ENCODE measurements at regions of chr12 and their contacts with region 1.

Region 1: DNA sequence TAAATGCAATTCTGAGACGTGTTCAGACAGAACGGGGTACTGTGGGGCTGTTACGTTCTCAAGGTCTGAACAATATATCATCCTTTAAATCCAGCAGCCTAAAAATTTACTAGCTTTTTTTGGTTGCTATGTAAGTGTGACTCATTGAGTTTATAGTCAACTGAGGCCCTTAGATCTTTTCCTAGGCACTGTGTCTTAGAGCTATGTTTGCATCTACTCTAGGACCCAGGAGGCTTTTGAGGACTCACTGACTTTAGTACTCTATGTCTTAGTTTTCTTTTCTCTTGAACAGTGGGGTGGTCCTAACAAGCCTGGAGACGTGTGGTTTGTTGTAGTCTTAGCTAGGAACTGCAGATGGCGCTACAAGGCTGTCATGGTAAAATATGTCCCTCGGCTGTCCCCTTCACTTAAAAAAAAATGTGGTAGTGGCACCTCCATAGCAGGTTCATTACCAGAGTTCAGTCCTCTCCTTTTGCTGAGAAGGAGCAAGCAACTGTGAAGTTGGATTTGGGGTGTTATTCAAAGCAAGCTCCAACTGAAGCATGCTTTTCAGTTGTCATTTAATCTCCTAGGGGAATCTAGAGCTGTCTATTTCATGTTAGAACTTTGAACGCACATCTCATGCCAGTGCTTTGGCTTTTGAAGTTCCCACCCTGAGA is 8.7 kb upstream of the SPATS2 start:
- DNase-seq: no peak
- H3K4me3 ChIP-seq: no peak overlapping the region
- H3K27me3 ChIP-seq: no peaks in the 10 kb centered on the region
- CTCF ChIP-seq: peak; percentile 77

Region 2: DNA sequence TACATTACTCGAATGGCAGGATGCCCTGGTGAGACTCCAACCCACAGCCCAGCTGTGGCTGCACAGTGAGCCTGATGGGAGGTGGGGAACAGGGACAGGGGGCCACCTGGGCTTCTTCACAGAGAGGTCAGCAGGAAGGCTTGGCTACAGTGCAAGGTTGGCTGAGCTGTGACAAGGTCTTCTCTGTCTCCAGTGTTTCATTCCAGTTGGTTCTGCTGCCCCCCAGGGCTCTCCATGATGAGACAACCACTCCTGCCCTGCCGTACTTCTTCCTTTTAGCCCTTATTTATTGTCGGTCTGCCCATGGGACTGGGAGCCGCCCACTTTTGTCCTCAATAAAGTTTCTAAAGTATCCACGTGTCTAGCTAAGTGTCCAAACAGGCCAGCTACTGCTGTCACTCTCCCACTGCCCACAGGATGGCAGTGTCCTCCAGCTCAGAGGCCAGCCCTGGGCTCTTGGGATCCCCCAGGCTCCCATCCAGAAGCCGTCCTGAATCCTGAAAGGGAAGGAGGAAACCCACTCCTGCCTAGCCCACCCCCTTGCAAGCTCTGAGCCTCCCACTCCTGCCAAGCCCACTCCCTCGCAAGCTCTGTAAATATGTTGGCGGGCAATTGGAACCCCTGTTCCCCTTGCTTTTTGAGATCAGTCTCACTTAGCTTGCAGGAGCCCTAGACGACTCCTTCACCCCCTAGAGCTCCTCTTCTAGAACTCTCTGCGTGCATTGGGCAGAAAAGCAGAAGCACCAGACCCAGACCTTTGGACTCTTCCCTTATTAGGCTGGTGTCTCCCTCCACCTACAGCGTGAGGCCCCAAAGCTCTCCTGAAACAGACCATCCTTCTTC is 27.0 kb before region 1 on chr12:
- CTCF ChIA-PET with region 1: interaction called, 68 read pairs
- POLR2A ChIA-PET with region 1: no interaction called
- DNase-seq: no peak
- H3K4me3 ChIP-seq: no peak overlapping the region
- H3K27me3 ChIP-seq: peaks cover 7% of the 10 kb centered on the region
- CTCF ChIP-seq: peak; percentile 87

Region 3: DNA sequence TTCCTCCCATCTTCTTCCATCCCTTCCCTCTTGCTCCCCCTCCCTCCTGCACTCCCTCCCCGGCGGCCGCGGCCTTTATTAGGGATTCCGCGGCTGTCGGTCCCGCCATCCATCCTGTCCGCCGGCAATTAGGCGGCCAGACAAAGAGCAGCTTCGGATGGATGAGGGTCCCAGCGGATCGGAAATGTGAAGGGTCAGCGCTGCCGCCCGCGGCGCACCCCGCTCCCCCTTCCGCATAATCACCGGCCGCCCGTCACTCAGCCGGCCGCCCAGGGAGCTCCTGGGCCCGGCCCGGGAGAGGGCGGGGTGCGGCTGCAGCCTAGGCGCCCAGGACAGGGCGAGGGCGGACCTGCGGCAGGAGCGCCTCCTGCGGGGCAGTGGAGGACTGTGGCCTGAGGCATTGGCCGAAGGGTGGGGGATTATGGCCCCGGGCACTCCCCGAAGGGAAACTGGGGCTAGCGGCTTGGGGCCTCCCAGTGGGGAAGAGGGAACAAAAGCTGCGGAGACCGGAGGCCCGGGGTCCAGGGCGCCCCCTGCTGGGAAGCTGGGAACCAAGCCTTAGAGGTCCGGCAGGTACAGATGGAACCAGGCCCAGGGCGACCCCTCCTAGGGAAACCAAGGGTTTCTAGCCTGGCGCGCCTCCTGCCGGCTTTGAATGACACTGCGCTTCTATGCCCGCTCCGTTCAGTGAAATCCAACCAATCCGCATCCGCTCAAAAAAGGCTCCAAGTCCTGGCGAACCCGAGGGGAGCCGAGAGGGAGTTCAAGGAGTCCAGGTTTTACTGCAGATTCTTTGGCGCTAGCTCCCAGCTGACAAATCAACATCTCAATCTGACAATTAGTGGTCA is 16.3 kb before region 1 on chr12:
- CTCF ChIA-PET with region 1: interaction called, 78 read pairs
- POLR2A ChIA-PET with region 1: no interaction called
- DNase-seq: no peak
- H3K4me3 ChIP-seq: peak overlapping the region; percentile 29
- H3K27me3 ChIP-seq: peaks cover 60% of the 10 kb centered on the region
- CTCF ChIP-seq: peak; percentile 86

Region 4: GRCh38 chr12:49496417-49497360 is 138.1 kb after region 1 on chr12:
- CTCF ChIA-PET with region 1: interaction called, 10 read pairs
- POLR2A ChIA-PET with region 1: no interaction called
- DNase-seq: no peak
- H3K4me3 ChIP-seq: no peak overlapping the region
- H3K27me3 ChIP-seq: no peaks in the 10 kb centered on the region
- CTCF ChIP-seq: no peak

Region 5: GRCh38 chr12:49553512-49554088 is 195.0 kb after region 1 on chr12:
- CTCF ChIA-PET with region 1: interaction called, 18 read pairs
- POLR2A ChIA-PET with region 1: no interaction called
- DNase-seq: no peak
- H3K4me3 ChIP-seq: no peak overlapping the region
- H3K27me3 ChIP-seq: peaks cover 18% of the 10 kb centered on the region
- CTCF ChIP-seq: peak; percentile 28; the same call in 1 of the 2 replicates